Caco-2 (cell line): ENCODE measurements at regions of chr17 and their contacts with region 1.

Region 1: GRCh38 chr17:48871551-48872351 is 20.8 kb upstream of the ATP5MC1 start:
- DNase-seq: peak; percentile 98 to 99
- H3K4me3 ChIP-seq: no peak overlapping the region
- H3K4me3 Mint-ChIP-seq: peak overlapping the region; percentile 50
- H3K27ac Mint-ChIP-seq: peak overlapping the region; percentile 85
- H3K4me1 ChIP-seq: peaks cover 54% of the 10 kb centered on the region
- H3K4me1 Mint-ChIP-seq: peaks cover 66% of the 10 kb centered on the region
- H3K27me3 ChIP-seq: no peaks in the 10 kb centered on the region
- H3K27me3 Mint-ChIP-seq: no peaks in the 10 kb centered on the region
- CTCF ChIP-seq: no peak

Region 2: DNA sequence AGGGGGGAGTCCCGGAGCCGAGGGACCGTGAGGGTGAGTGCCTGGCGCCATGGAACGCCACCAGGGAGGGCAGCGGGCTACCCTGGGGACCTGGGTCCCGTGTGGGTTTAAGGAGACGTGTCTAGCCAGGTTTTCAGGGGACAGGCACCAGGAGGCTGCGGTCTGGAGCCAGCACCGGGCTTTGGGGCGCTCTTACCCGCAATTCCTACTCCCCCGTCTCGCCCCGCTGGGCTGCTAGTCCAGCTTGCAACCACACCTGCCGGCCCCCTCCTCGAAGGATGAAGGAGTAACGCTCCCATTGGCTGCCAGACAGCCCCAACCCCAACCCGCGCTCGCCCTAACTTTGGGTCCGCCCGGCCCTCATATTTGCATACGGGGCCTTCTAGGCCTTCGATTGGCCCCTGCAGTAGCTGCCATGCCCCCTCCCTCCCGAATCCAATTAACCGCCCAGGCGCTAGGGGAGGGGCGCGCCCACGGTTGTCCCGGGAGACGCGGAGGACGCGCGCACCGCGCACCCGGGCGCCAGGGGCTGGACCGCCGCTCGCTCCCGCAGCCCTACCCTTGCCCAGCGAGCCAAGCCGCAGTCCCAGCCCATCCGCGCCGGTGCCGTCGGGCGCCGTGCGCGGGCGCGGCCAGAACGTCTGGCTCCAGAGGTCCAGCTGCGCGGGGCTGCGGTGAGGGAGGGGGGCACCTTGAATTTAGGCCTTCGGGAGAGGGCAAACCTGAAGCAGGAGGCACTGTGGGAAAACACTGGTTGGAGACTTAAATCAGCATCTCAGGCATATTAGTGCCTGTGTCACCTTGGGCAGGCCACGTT is 54.8 kb before region 1 on chr17 and contains the start of gene TTLL6:
- CTCF ChIA-PET with region 1: interaction called, 1,184 read pairs
- POLR2A ChIA-PET with region 1: interaction called, 7 read pairs
- intact Hi-C with region 1: loop called (anchors 1 kb)
- DNase-seq: peak; percentile 99 to 100
- H3K4me3 ChIP-seq: peak within 1 kb of the TSS; percentile 54
- H3K4me3 Mint-ChIP-seq: peak within 1 kb of the TSS; percentile 75
- H3K27ac Mint-ChIP-seq: no peak within 1 kb of the TSS
- H3K4me1 ChIP-seq: peaks cover 10% of the 10 kb centered on the region
- H3K4me1 Mint-ChIP-seq: peaks cover 8% of the 10 kb centered on the region
- H3K27me3 ChIP-seq: no peaks in the 10 kb centered on the region
- H3K27me3 Mint-ChIP-seq: peaks cover 2% of the 10 kb centered on the region
- CTCF ChIP-seq: peak in 1 of 2 experiments; percentile 17
- total RNA-seq, gene TTLL6: 0.16 and 0.81 TPM in 2 replicates

Region 3: GRCh38 chr17:48841395-48841831 is 30.3 kb before region 1 on chr17:
- CTCF ChIA-PET with region 1: no interaction called
- POLR2A ChIA-PET with region 1: interaction called, 11 read pairs
- intact Hi-C with region 1: no loop called
- DNase-seq: no peak
- H3K4me3 ChIP-seq: no peak overlapping the region
- H3K4me3 Mint-ChIP-seq: no peak overlapping the region
- H3K27ac Mint-ChIP-seq: no peak overlapping the region
- H3K4me1 ChIP-seq: peaks cover 20% of the 10 kb centered on the region
- H3K4me1 Mint-ChIP-seq: peaks cover 30% of the 10 kb centered on the region
- H3K27me3 ChIP-seq: no peaks in the 10 kb centered on the region
- H3K27me3 Mint-ChIP-seq: no peaks in the 10 kb centered on the region
- CTCF ChIP-seq: no peak

Region 4: GRCh38 chr17:48860034-48860433 is 11.7 kb before region 1 on chr17:
- CTCF ChIA-PET with region 1: interaction called, 3 read pairs
- POLR2A ChIA-PET with region 1: interaction called, 5 read pairs
- intact Hi-C with region 1: loop called (anchors 1 kb)
- DNase-seq: peak in 1 of 2 experiments; percentile 40
- H3K4me3 ChIP-seq: no peak overlapping the region
- H3K4me3 Mint-ChIP-seq: no peak overlapping the region
- H3K27ac Mint-ChIP-seq: no peak overlapping the region
- H3K4me1 ChIP-seq: peaks cover 5% of the 10 kb centered on the region
- H3K4me1 Mint-ChIP-seq: peaks cover 3% of the 10 kb centered on the region
- H3K27me3 ChIP-seq: no peaks in the 10 kb centered on the region
- H3K27me3 Mint-ChIP-seq: no peaks in the 10 kb centered on the region
- CTCF ChIP-seq: peak; percentile 56 to 78

Region 5: DNA sequence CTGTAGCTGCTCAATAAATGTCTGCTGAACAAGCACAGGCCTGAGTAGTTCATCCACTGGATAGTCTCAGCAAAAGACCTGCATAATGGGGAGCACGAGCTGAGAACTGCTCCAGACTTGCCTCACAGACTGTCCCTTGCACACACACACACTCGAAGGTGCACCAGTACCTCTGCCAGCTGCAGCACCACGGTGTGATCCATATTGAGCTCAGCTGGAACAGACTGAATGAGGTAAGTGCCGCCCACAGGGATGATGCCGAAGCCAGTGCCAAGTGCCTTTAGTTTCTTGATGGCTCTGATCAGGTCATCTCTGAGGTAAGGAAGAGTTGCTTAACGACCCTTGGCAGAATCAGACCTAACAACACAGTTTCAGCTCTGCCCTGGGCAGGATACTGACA is 61.3 kb after region 1 on chr17:
- CTCF ChIA-PET with region 1: no interaction called
- POLR2A ChIA-PET with region 1: no interaction called
- intact Hi-C with region 1: no loop called
- DNase-seq: no peak
- H3K4me3 ChIP-seq: no peak overlapping the region
- H3K4me3 Mint-ChIP-seq: no peak overlapping the region
- H3K27ac Mint-ChIP-seq: no peak overlapping the region
- H3K4me1 ChIP-seq: no peaks in the 10 kb centered on the region
- H3K4me1 Mint-ChIP-seq: no peaks in the 10 kb centered on the region
- H3K27me3 ChIP-seq: no peaks in the 10 kb centered on the region
- H3K27me3 Mint-ChIP-seq: no peaks in the 10 kb centered on the region
- CTCF ChIP-seq: no peak

Region 6: DNA sequence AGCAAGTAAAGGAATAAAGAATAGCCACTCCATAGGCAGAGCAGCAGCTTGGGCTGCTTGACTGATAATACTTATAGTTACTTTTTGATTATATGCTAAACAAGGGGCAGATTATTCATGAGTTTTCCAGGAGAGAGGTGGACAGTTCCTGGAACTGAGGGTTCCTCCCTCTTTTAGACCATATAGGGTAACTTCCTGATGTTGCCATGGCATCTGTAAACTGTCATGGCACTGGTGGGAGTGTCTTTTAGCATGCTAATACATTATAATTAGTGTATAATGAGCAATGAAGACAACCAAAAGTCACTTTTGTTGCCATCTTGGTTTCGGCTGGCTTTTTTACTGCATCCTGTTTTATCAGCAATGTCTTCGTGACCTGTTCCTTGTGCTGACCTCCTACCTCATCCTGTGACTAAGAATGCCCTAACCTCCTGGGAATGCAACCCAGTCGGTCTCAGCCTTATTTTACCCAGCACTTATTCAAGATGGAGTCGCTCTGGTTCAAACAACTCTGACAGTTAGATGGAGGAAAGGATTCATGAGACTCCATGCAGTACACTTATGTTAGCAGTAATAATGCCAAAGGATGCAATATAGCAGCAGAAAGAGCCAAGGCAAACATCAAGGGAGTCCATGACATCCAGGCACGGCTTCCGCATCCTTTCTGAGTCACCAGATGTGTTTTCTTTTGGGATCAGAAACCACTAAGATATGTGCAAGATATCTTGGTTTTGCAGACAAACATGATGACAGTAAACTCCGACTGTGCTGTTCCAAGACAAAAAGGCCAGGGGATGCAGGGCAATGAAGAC is 205.0 kb after region 1 on chr17:
- CTCF ChIA-PET with region 1: no interaction called
- POLR2A ChIA-PET with region 1: no interaction called
- intact Hi-C with region 1: no loop called
- DNase-seq: no peak
- H3K4me3 ChIP-seq: no peak overlapping the region
- H3K4me3 Mint-ChIP-seq: no peak overlapping the region
- H3K27ac Mint-ChIP-seq: no peak overlapping the region
- H3K4me1 ChIP-seq: peaks cover 20% of the 10 kb centered on the region
- H3K4me1 Mint-ChIP-seq: peaks cover 9% of the 10 kb centered on the region
- H3K27me3 ChIP-seq: no peaks in the 10 kb centered on the region
- H3K27me3 Mint-ChIP-seq: no peaks in the 10 kb centered on the region
- CTCF ChIP-seq: no peak

Region 7: DNA sequence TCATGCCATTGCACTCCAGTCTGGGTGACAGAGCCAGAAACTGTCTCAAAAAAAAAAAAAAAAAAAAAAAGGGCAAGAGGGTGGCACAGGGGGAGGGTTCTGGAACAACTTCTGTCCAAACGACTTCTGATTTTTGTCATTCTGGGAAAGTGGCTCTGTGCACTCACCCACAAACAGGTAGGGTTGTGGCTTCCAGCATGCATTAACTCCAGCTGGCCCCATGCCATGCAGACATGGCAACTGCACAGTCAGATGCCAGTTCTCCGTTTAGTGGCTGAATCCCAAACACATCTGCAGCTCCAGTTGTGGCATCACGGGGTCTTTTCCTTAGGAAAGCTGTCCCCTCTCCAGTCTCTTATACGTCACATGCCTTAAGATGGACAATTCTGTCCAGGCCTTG is 291.1 kb after region 1 on chr17:
- CTCF ChIA-PET with region 1: no interaction called
- POLR2A ChIA-PET with region 1: no interaction called
- intact Hi-C with region 1: no loop called
- DNase-seq: no peak
- H3K4me3 ChIP-seq: no peak overlapping the region
- H3K4me3 Mint-ChIP-seq: no peak overlapping the region
- H3K27ac Mint-ChIP-seq: no peak overlapping the region
- H3K4me1 ChIP-seq: peaks cover 7% of the 10 kb centered on the region
- H3K4me1 Mint-ChIP-seq: peaks cover 10% of the 10 kb centered on the region
- H3K27me3 ChIP-seq: no peaks in the 10 kb centered on the region
- H3K27me3 Mint-ChIP-seq: peaks cover 8% of the 10 kb centered on the region
- CTCF ChIP-seq: no peak